ENCODE measurements at regions of chr10 and their contacts with region 1.

Region 1: DNA sequence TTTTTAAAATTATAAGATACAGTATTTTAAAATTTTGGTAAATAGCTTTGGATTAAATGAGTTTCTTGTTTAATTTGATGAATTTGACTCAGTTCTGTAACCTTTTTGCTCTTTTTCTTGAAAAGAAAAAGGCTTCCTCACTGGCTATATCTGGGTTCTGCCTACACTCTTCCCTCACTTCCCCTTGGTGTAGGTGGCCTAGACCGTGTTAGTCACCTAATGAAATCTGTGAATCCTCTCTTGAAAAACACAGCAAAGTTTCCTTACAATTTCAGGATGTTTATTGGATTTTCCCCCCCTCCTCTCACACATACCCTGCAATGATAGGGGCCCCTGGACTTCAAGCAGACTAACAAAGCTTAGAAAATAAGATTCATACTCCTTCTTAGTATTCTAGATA is 231.6 kb downstream of the ADK start:
- DNase-seq: no peak
- ATAC-seq: no peak
- H3K4me3 ChIP-seq: no peak overlapping the region
- H3K4me3 Mint-ChIP-seq: peak overlapping the region in 6 of 10 donors; percentile 6 to 61 (median 50)
- H3K27ac ChIP-seq: no peak overlapping the region
- H3K27ac Mint-ChIP-seq: peak overlapping the region in 6 of 9 donors; percentile 25 to 88 (median 82)
- H3K4me1 ChIP-seq: peaks cover 7 to 35% of the 10 kb centered on the region in 2 donors
- H3K4me1 Mint-ChIP-seq: peaks cover 21 to 55% (median 41%) of the 10 kb centered on the region in 7 donors
- H3K27me3 ChIP-seq: no peaks in the 10 kb centered on the region
- H3K27me3 Mint-ChIP-seq: no peaks in the 10 kb centered on the region

Region 2: GRCh38 chr10:74176380-74177139 is 206.1 kb before region 1 on chr10:
- CTCF ChIA-PET with region 1: no interaction called
- POLR2A ChIA-PET with region 1: no interaction called
- intact Hi-C with region 1: no loop called
- DNase-seq: peak; percentile 90 to 96 (median 95)
- ATAC-seq: peak; percentile 98
- H3K4me3 ChIP-seq: peak overlapping the region; percentile 84
- H3K4me3 Mint-ChIP-seq: peak overlapping the region; percentile 87 to 98 (median 93)
- H3K27ac ChIP-seq: peak overlapping the region; percentile 86
- H3K27ac Mint-ChIP-seq: peak overlapping the region; percentile 94 to 98 (median 97)
- H3K4me1 ChIP-seq: peaks cover 6 to 7% of the 10 kb centered on the region in 2 donors
- H3K4me1 Mint-ChIP-seq: peaks cover 14 to 46% (median 40%) of the 10 kb centered on the region in 7 donors
- H3K27me3 ChIP-seq: no peaks in the 10 kb centered on the region
- H3K27me3 Mint-ChIP-seq: no peaks in the 10 kb centered on the region

Region 3: DNA sequence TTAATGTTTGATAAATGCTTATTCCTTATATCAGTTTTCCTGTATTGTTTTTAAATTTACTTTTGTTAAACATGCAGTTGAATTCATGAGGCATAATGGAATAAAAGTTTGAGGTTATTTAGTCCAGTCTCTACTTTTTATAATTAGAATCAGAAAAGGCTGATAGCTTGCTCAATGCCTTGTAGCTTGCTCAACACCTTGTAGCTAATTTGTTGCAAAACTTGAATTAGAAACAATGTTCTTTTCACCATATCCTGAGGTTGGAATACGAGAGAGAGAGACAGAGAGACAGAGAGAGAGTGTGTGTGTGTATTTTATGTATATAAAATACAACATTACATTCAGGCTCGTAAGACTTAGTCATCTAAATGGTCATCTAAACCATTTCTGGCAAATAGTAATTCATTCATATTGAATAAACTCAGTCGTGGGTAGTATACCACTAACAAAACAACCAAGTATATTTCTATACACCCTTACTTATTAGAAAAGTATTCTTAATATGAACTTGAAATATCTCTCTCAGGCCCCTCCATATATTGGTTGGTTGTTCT is 11.8 kb after region 1 on chr10:
- CTCF ChIA-PET with region 1: no interaction called
- POLR2A ChIA-PET with region 1: no interaction called
- intact Hi-C with region 1: loop called in 1 of 2 experiments (anchors 1 kb)
- DNase-seq: no peak
- ATAC-seq: no peak
- H3K4me3 ChIP-seq: no peak overlapping the region
- H3K4me3 Mint-ChIP-seq: no peak overlapping the region
- H3K27ac ChIP-seq: no peak overlapping the region
- H3K27ac Mint-ChIP-seq: no peak overlapping the region
- H3K4me1 ChIP-seq: no peaks in the 10 kb centered on the region
- H3K4me1 Mint-ChIP-seq: peaks cover 4 to 22% (median 12%) of the 10 kb centered on the region in 7 donors
- H3K27me3 ChIP-seq: no peaks in the 10 kb centered on the region
- H3K27me3 Mint-ChIP-seq: no peaks in the 10 kb centered on the region